PC-9 (cell line): ENCODE measurements at regions of chr9 and their contacts with region 1.

Region 1: GRCh38 chr9:108565651-108566378 is 290.0 kb downstream of the ACTL7B start:
- DNase-seq: peak; percentile 62 to 77
- H3K4me3 ChIP-seq: no peak overlapping the region
- H3K27ac ChIP-seq: no peak overlapping the region
- H3K4me1 ChIP-seq: no peaks in the 10 kb centered on the region
- H3K27me3 ChIP-seq: no peaks in the 10 kb centered on the region
- CTCF ChIP-seq: peak; percentile 92

Region 2: DNA sequence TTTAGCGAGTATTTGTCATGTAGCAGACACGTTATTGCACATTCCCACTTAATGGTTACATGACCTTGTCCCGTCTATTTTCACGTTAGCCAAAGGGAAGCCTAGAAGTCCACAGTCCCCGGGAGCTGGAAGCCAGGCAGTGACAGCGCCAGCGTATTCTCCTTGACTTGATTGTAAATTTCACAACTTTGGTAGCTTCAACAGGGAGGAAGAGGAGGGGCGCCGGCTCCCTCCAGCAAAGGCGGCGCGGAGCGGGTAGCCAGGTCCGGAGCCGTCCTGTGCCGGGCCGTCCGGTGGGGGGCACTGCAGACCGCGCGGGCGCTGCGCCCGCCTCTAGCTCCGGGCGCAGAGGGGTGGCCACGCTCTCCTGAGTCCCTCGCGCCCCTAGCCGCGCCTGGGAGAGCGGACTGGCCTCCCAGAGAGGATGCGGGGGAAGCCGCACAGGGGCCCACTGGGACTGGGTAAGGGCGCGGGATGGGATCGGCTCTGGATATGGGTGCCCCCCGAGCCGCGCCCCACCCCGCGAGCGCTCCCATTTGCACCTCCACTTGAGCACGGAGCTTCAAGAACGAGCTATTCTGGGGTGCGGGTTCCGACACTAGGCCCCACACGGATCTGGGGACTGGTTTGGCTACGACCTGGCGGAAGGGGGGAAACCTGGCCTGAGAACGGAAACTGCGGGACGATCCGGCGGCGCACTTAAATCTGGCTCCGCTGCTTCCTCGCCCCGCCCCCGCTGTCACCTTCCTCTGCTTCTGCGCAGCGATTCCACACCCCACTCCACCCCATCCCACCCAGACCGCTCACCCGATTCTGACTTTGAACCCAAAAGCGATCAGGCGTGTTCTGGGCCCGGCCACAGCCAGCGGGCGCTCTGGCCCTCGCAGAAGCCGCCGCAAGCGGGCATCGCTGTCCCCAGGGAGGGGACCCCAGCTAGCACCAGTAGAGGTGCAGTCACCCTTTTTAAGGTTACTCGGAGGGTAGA is 1100.1 kb before region 1 on chr9:
- CTCF ChIA-PET with region 1: no interaction called
- POLR2A ChIA-PET with region 1: no interaction called
- intact Hi-C with region 1: loop called (anchors 5 kb)
- DNase-seq: peak in 1 of 2 experiments; percentile 59
- H3K4me3 ChIP-seq: no peak overlapping the region
- H3K27ac ChIP-seq: no peak overlapping the region
- H3K4me1 ChIP-seq: peaks cover 5% of the 10 kb centered on the region; the same call in 1 of the 2 replicates
- H3K27me3 ChIP-seq: no peaks in the 10 kb centered on the region
- CTCF ChIP-seq: no peak

Region 3: DNA sequence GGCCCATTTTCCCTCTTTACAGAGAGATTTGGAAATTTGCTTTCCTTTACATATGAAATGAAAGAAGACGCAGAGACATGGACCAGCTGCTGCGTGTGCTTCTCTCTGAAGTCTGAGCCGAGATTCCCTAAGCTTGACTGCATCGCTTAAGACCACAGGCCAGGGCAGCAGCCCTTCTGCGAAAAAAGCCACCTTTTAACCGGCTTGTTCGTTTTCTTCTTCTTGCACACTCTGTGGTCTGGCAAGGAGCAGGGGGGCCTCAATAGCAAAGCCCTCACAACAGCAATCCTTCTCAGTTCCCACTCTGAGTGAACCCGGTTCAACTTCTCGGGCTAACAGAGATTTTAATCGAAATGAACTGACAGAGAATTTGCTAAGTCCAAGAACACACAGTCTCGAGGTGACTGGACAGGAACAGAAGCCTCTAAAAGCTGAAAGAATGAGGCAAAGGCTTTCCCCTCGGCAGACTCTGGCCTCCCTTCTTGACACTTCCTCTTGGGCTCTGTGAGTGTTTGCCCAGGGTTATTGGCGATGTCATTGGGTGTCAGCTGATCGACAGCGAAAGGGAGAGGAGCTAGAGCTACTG is 563.4 kb before region 1 on chr9:
- CTCF ChIA-PET with region 1: no interaction called
- POLR2A ChIA-PET with region 1: no interaction called
- intact Hi-C with region 1: loop called (anchors 10 kb)
- DNase-seq: no peak
- H3K4me3 ChIP-seq: no peak overlapping the region
- H3K27ac ChIP-seq: no peak overlapping the region
- H3K4me1 ChIP-seq: no peaks in the 10 kb centered on the region
- H3K27me3 ChIP-seq: no peaks in the 10 kb centered on the region
- CTCF ChIP-seq: no peak

Region 4: DNA sequence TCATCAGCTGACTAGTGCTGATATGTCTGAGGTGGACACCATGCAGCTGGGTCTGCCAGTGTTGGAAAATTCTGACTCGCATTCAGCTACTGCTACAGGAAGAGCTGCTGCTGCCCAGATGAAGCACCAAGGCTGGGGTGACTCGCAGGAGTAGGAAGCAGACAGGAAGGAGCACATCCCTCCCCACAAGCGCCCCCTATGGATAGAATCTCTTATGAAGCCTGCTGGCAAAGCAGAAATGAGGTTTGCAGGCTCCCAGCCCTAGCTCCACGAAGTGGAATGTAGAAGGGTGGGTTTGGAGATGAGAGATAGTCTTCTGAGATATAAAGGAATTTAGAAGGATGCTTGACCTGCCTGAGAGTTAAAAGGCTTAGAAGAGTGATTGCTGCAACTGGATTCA is 153.1 kb before region 1 on chr9:
- CTCF ChIA-PET with region 1: interaction called, 10 read pairs
- POLR2A ChIA-PET with region 1: no interaction called
- intact Hi-C with region 1: no loop called
- DNase-seq: no peak
- H3K4me3 ChIP-seq: no peak overlapping the region
- H3K27ac ChIP-seq: no peak overlapping the region
- H3K4me1 ChIP-seq: no peaks in the 10 kb centered on the region
- H3K27me3 ChIP-seq: no peaks in the 10 kb centered on the region
- CTCF ChIP-seq: no peak

Region 5: DNA sequence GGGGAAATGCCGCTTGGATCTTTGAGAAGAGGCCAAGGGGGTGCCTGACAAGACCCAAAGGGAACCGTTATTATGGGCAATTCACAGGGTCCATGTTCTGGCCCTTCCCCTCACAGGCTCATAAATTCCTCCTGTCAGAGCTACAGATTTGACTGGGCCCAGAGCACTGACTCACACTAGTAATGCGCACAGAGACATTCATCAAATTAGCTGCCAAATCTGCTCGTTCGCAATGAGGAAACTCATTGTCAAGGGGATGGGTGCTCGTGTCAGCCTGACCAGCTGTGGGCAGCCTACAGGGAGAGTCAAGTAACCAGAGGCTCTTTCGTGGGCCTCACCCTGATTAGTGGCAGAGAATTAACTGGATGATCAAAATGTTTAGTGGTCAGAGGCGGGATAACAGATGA is 87.4 kb before region 1 on chr9:
- CTCF ChIA-PET with region 1: no interaction called
- POLR2A ChIA-PET with region 1: no interaction called
- intact Hi-C with region 1: loop called (anchors 2 kb)
- DNase-seq: peak; percentile 57 to 93
- H3K4me3 ChIP-seq: no peak overlapping the region
- H3K27ac ChIP-seq: peak overlapping the region; percentile 87
- H3K4me1 ChIP-seq: peaks cover 48% of the 10 kb centered on the region
- H3K27me3 ChIP-seq: no peaks in the 10 kb centered on the region
- CTCF ChIP-seq: no peak